GM18951 (cell line): ENCODE measurements at regions of chr20 and their contacts with region 1.

Region 1: GRCh38 chr20:49982346-49983122 is at the start of gene SNAI1:
- POLR2A ChIP-seq: peak; percentile 89

Region 2: GRCh38 chr20:50070991-50071888 is 88.7 kb after region 1 on chr20:
- in situ Hi-C with region 1: loop called (anchors 10 kb)
- POLR2A ChIP-seq: no peak

Region 3: GRCh38 chr20:50189681-50190582 is 207.4 kb after region 1 on chr20:
- in situ Hi-C with region 1: loop called (anchors 10 kb)
- POLR2A ChIP-seq: no peak

Region 4: GRCh38 chr20:50460460-50461267 is 478.1 kb after region 1 on chr20:
- in situ Hi-C with region 1: loop called (anchors 25 kb)
- POLR2A ChIP-seq: no peak